ENCODE measurements at regions of chr2 and their contacts with region 1.

Region 1: DNA sequence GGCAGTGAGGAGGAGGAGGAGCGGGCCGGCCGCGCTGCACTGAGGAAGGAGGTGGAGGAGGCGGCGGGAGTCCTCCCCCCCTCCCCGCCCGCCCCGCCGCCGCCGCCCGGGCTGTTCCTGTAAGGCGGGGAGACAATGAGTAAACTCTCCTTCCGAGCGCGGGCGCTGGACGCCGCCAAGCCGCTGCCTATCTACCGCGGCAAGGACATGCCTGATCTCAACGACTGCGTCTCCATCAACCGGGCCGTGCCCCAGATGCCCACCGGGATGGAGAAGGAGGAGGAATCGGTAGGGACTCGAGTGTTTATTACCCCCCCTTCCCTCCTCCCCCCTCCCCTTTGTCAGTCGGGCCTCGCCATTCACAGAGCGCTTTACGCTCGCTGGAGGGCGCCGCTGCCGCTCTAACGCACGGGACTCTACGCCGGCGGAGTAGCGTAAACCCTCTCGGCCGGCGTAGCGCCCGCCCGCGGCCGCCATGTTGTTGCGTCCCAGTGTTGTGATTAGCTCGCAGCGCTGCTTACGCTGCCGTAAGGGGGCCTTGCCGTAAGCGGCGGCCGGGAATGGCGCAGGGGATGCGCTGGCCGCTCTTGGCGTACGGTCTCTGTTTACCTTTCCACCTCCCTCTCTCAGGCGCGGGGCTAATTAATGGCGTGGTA is 460 bp downstream of the EPC2 start:
- DNase-seq: peak; percentile 78 to 89
- H3K4me3 ChIP-seq: peak overlapping the region; percentile 95
- H3K27ac ChIP-seq: peak overlapping the region; percentile 85
- H3K4me1 ChIP-seq: peaks cover 20% of the 10 kb centered on the region
- H3K27me3 ChIP-seq: no peaks in the 10 kb centered on the region
- CTCF ChIP-seq: peak; percentile 53

Region 2: DNA sequence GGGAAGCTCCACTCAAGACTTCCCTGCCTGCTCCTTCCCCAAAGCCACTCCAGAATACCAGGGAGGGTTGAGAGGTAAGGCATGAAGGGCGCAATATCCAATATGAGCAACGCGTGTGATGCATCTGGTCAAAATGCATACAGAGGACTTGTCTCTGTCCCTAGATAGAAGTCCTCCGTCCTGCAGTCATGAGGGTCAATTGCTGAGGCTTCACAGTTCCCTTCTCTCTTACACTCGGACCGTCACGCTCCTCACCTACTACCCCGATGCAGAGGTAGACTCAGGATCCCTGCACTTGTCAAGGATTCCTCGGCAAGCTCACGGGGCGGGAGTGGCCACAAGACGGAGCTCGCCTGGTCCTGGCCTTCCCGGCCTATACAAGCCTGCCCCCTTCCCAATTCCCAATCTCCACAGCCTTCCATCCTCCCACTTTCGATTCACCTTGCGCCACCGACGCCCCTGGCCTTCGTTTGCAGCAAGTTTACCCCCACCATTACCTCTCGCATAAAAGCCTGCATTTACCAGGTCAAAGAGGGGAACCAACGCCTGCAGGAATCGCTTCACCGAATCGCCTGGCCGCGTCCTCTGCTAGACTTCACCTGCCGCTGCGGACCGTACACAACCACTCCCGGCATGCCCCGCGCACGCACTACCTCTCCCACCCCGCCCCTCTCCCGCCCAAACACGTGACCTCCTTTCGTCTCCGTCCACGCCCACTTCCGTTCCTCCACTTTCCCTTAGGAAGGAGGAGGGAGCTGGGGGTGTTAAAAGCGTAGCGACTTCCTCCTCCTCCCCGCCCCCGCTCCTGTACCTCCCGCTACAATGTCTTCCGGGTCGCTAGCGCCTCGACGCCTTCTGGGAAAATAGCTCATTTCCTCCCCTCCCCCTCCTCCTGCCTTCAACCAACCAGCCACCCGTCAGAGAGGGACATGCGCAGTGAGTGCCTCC is 624.6 kb before region 1 on chr2 and contains the start of gene ORC4:
- CTCF ChIA-PET with region 1: interaction called, 3 read pairs
- POLR2A ChIA-PET with region 1: interaction called, 28 read pairs
- intact Hi-C with region 1: loop called (anchors 10 kb)
- DNase-seq: peak; percentile 93 to 94
- H3K4me3 ChIP-seq: peak within 1 kb of the TSS; percentile 77
- H3K27ac ChIP-seq: peak within 1 kb of the TSS; percentile 68
- H3K4me1 ChIP-seq: peaks cover 28% of the 10 kb centered on the region
- H3K27me3 ChIP-seq: no peaks in the 10 kb centered on the region
- CTCF ChIP-seq: peak; percentile 36; the same call in 1 of the 2 replicates
- total RNA-seq, gene ORC4: 28.4 and 44.2 TPM in 2 replicates

Region 3: GRCh38 chr2:148528356-148529064 is 116.5 kb before region 1 on chr2:
- CTCF ChIA-PET with region 1: interaction called, 18 read pairs
- POLR2A ChIA-PET with region 1: no interaction called
- intact Hi-C with region 1: no loop called
- DNase-seq: no peak
- H3K4me3 ChIP-seq: no peak overlapping the region
- H3K27ac ChIP-seq: no peak overlapping the region
- H3K4me1 ChIP-seq: no peaks in the 10 kb centered on the region
- H3K27me3 ChIP-seq: no peaks in the 10 kb centered on the region
- CTCF ChIP-seq: no peak

Region 4: DNA sequence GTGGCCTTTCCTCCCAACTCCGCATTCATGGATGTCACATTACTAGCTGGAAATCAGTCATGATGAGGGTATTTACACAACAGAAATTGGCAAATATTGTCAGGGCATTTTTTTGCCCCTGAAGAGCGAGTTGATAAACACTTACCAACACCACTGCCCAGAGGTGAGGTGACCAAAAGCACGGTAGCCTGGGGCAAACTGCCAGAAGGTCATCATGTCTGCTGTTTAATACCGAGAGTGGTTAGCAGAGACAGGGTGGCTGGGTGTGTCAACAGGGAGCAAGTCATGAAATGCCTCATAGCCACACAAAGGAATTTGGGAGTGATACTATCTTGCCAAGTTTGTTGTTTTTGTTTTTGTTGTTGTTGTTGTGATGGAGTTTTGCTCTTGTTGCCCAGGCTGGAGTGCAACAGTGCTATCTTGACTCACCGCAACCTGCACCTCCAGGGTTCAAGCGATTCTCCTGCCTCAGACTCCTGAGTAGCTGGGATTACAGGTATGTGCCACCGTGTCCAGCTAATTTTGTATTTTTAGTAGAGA is 37.4 kb before region 1 on chr2:
- CTCF ChIA-PET with region 1: no interaction called
- POLR2A ChIA-PET with region 1: interaction called, 11 read pairs
- intact Hi-C with region 1: no loop called
- DNase-seq: peak; percentile 84 to 87
- H3K4me3 ChIP-seq: no peak overlapping the region
- H3K27ac ChIP-seq: peak overlapping the region; percentile 22
- H3K4me1 ChIP-seq: peaks cover 18% of the 10 kb centered on the region
- H3K27me3 ChIP-seq: no peaks in the 10 kb centered on the region
- CTCF ChIP-seq: no peak

Region 5: DNA sequence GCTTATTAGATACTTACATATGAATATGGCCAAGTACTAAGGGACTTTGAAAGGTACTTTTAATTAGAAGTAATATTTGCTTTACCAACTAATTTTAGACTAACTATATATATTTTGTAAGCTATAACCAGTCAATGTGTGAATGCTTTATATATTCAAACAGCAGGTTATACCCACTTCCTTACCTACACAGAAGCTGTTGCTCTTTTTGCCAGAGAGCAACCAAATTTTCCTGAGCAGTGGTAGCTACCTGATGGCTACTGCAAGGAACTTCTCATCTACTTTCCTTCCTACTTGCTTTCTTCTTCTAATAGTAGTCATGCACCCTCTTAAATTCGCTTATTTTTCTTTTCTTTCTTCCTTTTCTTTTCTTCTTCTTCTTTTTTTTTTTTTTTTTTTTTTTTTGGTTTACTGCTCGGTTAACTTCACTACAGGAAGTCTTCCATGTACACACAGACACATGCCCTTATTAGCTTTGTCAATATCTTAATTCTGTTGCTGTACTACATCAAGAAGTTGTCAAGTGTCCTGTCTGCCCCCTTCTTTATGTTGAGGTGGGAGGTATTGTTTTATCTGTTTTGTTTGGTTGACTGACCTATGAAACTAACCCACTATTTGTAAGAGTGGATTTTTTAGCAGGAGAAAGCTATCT is 94.6 kb after region 1 on chr2:
- CTCF ChIA-PET with region 1: interaction called, 10 read pairs
- POLR2A ChIA-PET with region 1: no interaction called
- intact Hi-C with region 1: no loop called
- DNase-seq: no peak
- H3K4me3 ChIP-seq: no peak overlapping the region
- H3K27ac ChIP-seq: no peak overlapping the region
- H3K4me1 ChIP-seq: no peaks in the 10 kb centered on the region
- H3K27me3 ChIP-seq: no peaks in the 10 kb centered on the region
- CTCF ChIP-seq: no peak

Region 6: GRCh38 chr2:148874868-148875341 is 229.9 kb after region 1 on chr2 and contains the start of gene KIF5C:
- CTCF ChIA-PET with region 1: no interaction called
- POLR2A ChIA-PET with region 1: no interaction called
- intact Hi-C with region 1: loop called (anchors 10 kb)
- DNase-seq: peak; percentile 62 to 66
- H3K4me3 ChIP-seq: peak within 1 kb of the TSS; percentile 20; the same call in 1 of the 2 replicates
- H3K27ac ChIP-seq: no peak within 1 kb of the TSS
- H3K4me1 ChIP-seq: 0 out of 2 replicates have a peak, but pooled peaks cover 10% of the 10 kb centered on the region
- H3K27me3 ChIP-seq: no peaks in the 10 kb centered on the region
- CTCF ChIP-seq: no peak
- total RNA-seq, gene KIF5C: 0.07 and 0.23 TPM in 2 replicates

Region 7: GRCh38 chr2:149098701-149099100 is 453.7 kb after region 1 on chr2:
- CTCF ChIA-PET with region 1: no interaction called
- POLR2A ChIA-PET with region 1: no interaction called
- intact Hi-C with region 1: no loop called
- DNase-seq: peak in 1 of 2 experiments; percentile 87
- H3K4me3 ChIP-seq: no peak overlapping the region
- H3K27ac ChIP-seq: peak overlapping the region; percentile 70; the same call in 1 of the 2 replicates
- H3K4me1 ChIP-seq: peaks cover 12% of the 10 kb centered on the region
- H3K27me3 ChIP-seq: no peaks in the 10 kb centered on the region
- CTCF ChIP-seq: no peak